Activated B cell treated with CpG ODN at 0.5 μM for 24 hours (primary cell): ENCODE measurements at regions of chr1 and their contacts with region 1.

Region 1: GRCh38 chr1:222713091-222713961 is 962 bp downstream of the BROX start:
- DNase-seq: peak; percentile 90
- ATAC-seq: peak; percentile 73
- H3K4me3 Mint-ChIP-seq: peak overlapping the region; percentile 93
- H3K27ac Mint-ChIP-seq: peak overlapping the region; percentile 100
- H3K4me1 Mint-ChIP-seq: peaks cover 54% of the 10 kb centered on the region
- H3K27me3 Mint-ChIP-seq: no peaks in the 10 kb centered on the region
- CTCF ChIP-seq: no peak

Region 2: GRCh38 chr1:220879076-220879508 is 1834.2 kb before region 1 on chr1 and contains the start of gene HLX:
- CTCF ChIA-PET with region 1: no interaction called
- POLR2A ChIA-PET with region 1: no interaction called
- intact Hi-C with region 1: loop called (anchors 2 kb)
- DNase-seq: peak; percentile 75
- ATAC-seq: peak; percentile 80
- H3K4me3 Mint-ChIP-seq: peak within 1 kb of the TSS; percentile 94
- H3K27ac Mint-ChIP-seq: peak within 1 kb of the TSS; percentile 93
- H3K4me1 Mint-ChIP-seq: peaks cover 50% of the 10 kb centered on the region
- H3K27me3 Mint-ChIP-seq: peaks cover 2% of the 10 kb centered on the region
- CTCF ChIP-seq: no peak
- total RNA-seq, gene HLX: 3.2 and 4.6 TPM in 2 replicates

Region 3: GRCh38 chr1:222250376-222250775 is 462.9 kb before region 1 on chr1:
- CTCF ChIA-PET with region 1: no interaction called
- POLR2A ChIA-PET with region 1: no interaction called
- intact Hi-C with region 1: no loop called
- DNase-seq: no peak
- ATAC-seq: no peak
- H3K4me3 Mint-ChIP-seq: no peak overlapping the region
- H3K27ac Mint-ChIP-seq: no peak overlapping the region
- H3K4me1 Mint-ChIP-seq: no peaks in the 10 kb centered on the region
- H3K27me3 Mint-ChIP-seq: peaks cover 8% of the 10 kb centered on the region
- CTCF ChIP-seq: no peak

Region 4: GRCh38 chr1:222589462-222590302 is 123.6 kb before region 1 on chr1 and contains the start of gene TAF1A:
- CTCF ChIA-PET with region 1: no interaction called
- POLR2A ChIA-PET with region 1: interaction called, 10 read pairs
- intact Hi-C with region 1: loop called (anchors 1 kb)
- DNase-seq: peak; percentile 67
- ATAC-seq: peak; percentile 98
- H3K4me3 Mint-ChIP-seq: peak within 1 kb of the TSS; percentile 99
- H3K27ac Mint-ChIP-seq: peak within 1 kb of the TSS; percentile 99
- H3K4me1 Mint-ChIP-seq: peaks cover 57% of the 10 kb centered on the region
- H3K27me3 Mint-ChIP-seq: no peaks in the 10 kb centered on the region
- CTCF ChIP-seq: no peak
- total RNA-seq, gene TAF1A: 15.2 and 19.1 TPM in 2 replicates

Region 5: DNA sequence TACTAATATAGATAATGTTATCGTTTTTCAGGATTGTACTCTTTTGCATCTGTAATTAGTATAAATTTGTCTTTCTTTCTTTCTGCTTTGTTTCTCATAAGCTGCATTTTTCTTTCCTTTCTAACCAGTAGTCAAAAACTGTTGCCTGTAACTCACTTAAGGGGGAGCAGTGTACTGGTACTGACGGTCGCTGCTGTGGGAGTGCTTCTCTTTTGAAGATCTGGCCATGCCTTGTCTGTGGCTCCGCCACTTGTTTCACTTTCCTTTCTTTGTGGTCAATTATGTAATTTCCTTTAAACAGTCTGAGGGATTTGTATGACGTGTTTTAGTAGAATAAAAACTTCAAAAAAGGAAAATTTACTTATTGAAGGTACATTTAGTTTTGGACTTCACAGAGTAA is 58.5 kb before region 1 on chr1:
- CTCF ChIA-PET with region 1: interaction called, 6 read pairs
- POLR2A ChIA-PET with region 1: no interaction called
- intact Hi-C with region 1: loop called (anchors 1 kb)
- DNase-seq: no peak
- ATAC-seq: peak; percentile 99
- H3K4me3 Mint-ChIP-seq: peak overlapping the region; percentile 39
- H3K27ac Mint-ChIP-seq: peak overlapping the region; percentile 80
- H3K4me1 Mint-ChIP-seq: peaks cover 33% of the 10 kb centered on the region
- H3K27me3 Mint-ChIP-seq: no peaks in the 10 kb centered on the region
- CTCF ChIP-seq: no peak

Region 6: GRCh38 chr1:222739465-222739864 is 26.1 kb after region 1 on chr1:
- CTCF ChIA-PET with region 1: interaction called, 10 read pairs
- POLR2A ChIA-PET with region 1: interaction called, 127 read pairs
- intact Hi-C with region 1: no loop called
- DNase-seq: no peak
- ATAC-seq: peak; percentile 40
- H3K4me3 Mint-ChIP-seq: no peak overlapping the region
- H3K27ac Mint-ChIP-seq: no peak overlapping the region
- H3K4me1 Mint-ChIP-seq: peaks cover 43% of the 10 kb centered on the region
- H3K27me3 Mint-ChIP-seq: no peaks in the 10 kb centered on the region
- CTCF ChIP-seq: no peak

Region 7: GRCh38 chr1:222798116-222798515 is 84.8 kb after region 1 on chr1:
- CTCF ChIA-PET with region 1: no interaction called
- POLR2A ChIA-PET with region 1: interaction called, 14 read pairs
- intact Hi-C with region 1: no loop called
- DNase-seq: no peak
- ATAC-seq: peak; percentile 99
- H3K4me3 Mint-ChIP-seq: no peak overlapping the region
- H3K27ac Mint-ChIP-seq: peak overlapping the region; percentile 75
- H3K4me1 Mint-ChIP-seq: peaks cover 22% of the 10 kb centered on the region
- H3K27me3 Mint-ChIP-seq: no peaks in the 10 kb centered on the region
- CTCF ChIP-seq: no peak

Region 8: GRCh38 chr1:222844189-222844779 is 131.0 kb after region 1 on chr1:
- CTCF ChIA-PET with region 1: no interaction called
- POLR2A ChIA-PET with region 1: no interaction called
- intact Hi-C with region 1: no loop called
- DNase-seq: no peak
- ATAC-seq: no peak
- H3K4me3 Mint-ChIP-seq: no peak overlapping the region
- H3K27ac Mint-ChIP-seq: no peak overlapping the region
- H3K4me1 Mint-ChIP-seq: no peaks in the 10 kb centered on the region
- H3K27me3 Mint-ChIP-seq: no peaks in the 10 kb centered on the region
- CTCF ChIP-seq: no peak

Region 9: DNA sequence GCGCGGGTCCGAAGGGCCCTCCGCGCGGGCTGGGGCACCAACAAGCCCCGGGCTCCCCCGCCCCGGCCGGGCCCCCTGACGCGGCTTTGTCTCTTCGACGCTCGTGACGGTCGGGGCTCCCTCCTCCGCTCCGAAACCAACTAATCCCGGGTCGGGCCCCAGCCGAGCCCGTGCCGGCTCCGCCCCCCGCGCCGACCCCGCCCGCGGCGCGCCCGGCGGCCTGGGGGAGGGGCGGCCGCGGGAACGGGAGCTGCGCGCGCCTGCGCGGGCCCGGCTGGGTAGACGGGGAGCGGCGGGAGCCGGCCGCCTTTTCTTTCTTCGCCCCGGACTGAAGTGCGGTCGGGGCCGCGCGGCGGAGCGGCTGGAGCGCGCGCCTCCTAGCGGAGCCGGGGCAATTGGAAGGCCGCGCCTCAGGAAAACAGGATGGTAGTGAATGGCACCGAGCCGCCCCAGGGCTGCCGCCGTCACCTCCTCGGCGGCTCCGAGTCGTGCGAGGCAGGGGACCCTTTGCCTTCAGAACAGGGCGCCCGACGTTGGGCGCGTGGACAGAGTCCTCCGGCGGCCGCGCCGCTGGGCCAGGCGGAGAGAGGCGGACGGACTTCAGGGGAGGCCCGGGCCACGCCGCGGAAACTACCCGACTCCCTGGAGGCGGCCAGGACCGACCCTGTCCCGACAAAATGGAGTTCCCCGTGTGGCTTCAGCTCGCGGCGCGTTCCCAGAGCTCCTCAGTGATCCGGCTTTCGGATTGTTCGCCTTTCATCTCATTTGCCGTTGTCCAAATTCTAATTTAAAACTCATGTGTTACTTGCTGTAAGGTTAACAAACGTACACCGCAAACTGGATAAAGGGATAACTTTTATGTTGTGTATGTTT is 1132.7 kb after region 1 on chr1 and contains the start of gene TP53BP2:
- CTCF ChIA-PET with region 1: no interaction called
- POLR2A ChIA-PET with region 1: no interaction called
- intact Hi-C with region 1: loop called (anchors 10 kb)
- DNase-seq: peak; percentile 92
- ATAC-seq: peak; percentile 84
- H3K4me3 Mint-ChIP-seq: peak within 1 kb of the TSS; percentile 89
- H3K27ac Mint-ChIP-seq: peak within 1 kb of the TSS; percentile 96
- H3K4me1 Mint-ChIP-seq: peaks cover 36% of the 10 kb centered on the region
- H3K27me3 Mint-ChIP-seq: no peaks in the 10 kb centered on the region
- CTCF ChIP-seq: no peak
- total RNA-seq, gene TP53BP2: 50.4 and 52.9 TPM in 2 replicates